ENCODE measurements at regions of chr4 and their contacts with region 1.

Region 1: DNA sequence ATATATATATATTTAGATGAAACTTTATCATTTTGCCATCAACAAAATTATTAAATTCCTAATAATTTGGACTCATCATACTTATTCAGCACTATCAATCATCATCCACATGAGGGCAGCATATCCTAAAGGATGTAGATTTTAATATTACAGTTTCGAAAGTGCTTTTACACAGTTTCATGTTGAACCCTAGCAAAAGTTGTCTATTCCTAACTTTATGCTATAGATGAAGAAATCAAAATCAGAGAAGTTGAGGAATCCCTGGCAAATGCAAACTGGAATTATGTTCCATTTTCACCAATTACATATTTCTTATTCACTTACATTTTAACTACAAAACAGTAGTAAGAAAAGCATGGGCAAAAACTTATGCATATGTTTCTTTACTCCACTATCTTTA is 36.6 kb upstream of the UGT2A1 start:
- DNase-seq: no peak
- H3K4me3 ChIP-seq: peak overlapping the region in 3 of 59 donors; percentile 7 to 35 (median 11)
- H3K27ac ChIP-seq: no peak overlapping the region
- H3K27me3 ChIP-seq: no peaks in the 10 kb centered on the region
- CTCF ChIP-seq: peak; percentile 52 to 89 (median 74)

Region 2: GRCh38 chr4:69881173-69881773 is 191.7 kb after region 1 on chr4:
- intact Hi-C with region 1: loop called (anchors 5 to 10 kb)
- DNase-seq: peak in 3 of 10 donors; percentile 6 to 40 (median 17)
- H3K4me3 ChIP-seq: no peak overlapping the region
- H3K27ac ChIP-seq: no peak overlapping the region
- H3K27me3 ChIP-seq: peaks cover 0 to 6% (median 0%) of the 10 kb centered on the region in 45 donors
- CTCF ChIP-seq: peak; percentile 28 to 94 (median 76)

Region 3: DNA sequence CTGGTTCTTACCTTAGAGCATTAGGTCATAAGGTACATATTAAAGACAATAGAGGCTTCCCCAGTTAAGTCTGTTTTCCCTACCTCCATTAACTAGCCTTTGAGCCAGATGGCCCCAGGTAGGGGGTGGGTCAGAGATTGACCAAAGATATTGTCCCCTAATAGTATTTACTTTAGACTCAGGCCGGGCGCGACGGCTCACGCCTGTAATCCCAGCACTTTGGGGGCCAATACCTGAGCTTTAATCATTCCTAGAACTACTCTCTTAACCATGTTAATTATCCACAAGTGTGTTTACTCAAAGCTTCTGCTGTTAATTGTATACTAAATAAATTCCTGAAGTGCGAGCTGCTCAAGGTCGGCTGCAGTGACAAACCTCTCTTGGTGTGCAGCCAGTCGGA is 874.4 kb after region 1 on chr4:
- intact Hi-C with region 1: loop called in 1 of 2 experiments (anchors 5 kb)
- DNase-seq: no peak
- H3K4me3 ChIP-seq: no peak overlapping the region
- H3K27ac ChIP-seq: no peak overlapping the region
- H3K27me3 ChIP-seq: no peaks in the 10 kb centered on the region
- CTCF ChIP-seq: no peak

Measured in dorsolateral prefrontal cortex (tissue), 120 donors.